ENCODE measurements at regions of chr3 and their contacts with region 1.

Region 1: DNA sequence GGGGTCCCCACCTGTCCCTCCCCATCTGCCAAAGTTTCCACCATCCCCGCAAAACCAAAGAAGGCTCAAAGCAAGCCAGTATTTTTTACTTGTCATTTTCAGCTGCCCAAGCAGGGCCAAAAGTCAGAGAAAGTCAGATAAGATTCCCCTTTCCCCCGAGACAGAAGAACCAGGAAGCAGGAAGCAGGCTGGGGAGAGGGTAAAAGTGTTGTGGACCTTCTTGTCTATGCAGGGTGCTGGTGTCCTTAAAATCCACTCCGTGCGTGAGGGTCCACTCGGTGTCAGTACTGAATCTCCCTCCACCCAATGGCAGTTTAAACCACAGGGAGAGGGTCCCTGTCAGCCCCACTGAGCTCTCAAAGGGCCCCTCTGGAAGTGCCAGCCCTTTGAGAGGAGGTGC is 20.2 kb upstream of the RPL32 start:
- DNase-seq: no peak
- ATAC-seq: no peak
- H3K4me3 ChIP-seq: no peak overlapping the region
- H3K27ac ChIP-seq: no peak overlapping the region
- H3K4me1 ChIP-seq: peaks cover 0 to 12% (median 0%) of the 10 kb centered on the region in 9 donors
- H3K27me3 ChIP-seq: no peaks in the 10 kb centered on the region
- CTCF ChIP-seq: no peak

Region 2: GRCh38 chr3:12796171-12797123 is 65.2 kb before region 1 on chr3 and contains the start of gene CAND2:
- intact Hi-C with region 1: loop called in 1 of 10 experiments (anchors 2 kb)
- DNase-seq: peak; percentile 75 to 78
- ATAC-seq: peak; percentile 87 to 93 (median 90)
- H3K4me3 ChIP-seq: peak within 1 kb of the TSS; percentile 54 to 83 (median 76)
- H3K27ac ChIP-seq: peak within 1 kb of the TSS; percentile 9 to 96 (median 91)
- H3K4me1 ChIP-seq: peaks cover 0 to 47% (median 15%) of the 10 kb centered on the region in 9 donors
- H3K27me3 ChIP-seq: peaks cover 0 to 19% (median 0%) of the 10 kb centered on the region in 7 donors
- CTCF ChIP-seq: no peak
- total RNA-seq, gene CAND2: 46.9 to 99.0 (median 68.4) TPM